ENCODE measurements at regions of chr10 and their contacts with region 1.

Region 1: GRCh38 chr10:89793649-89794254 is 92.4 kb downstream of the KIF20B start:
- DNase-seq: peak in 5 of 9 experiments; percentile 14 to 74 (median 27)
- ATAC-seq: peak; percentile 61
- H3K4me3 ChIP-seq: no peak overlapping the region
- H3K4me3 Mint-ChIP-seq: no peak overlapping the region
- H3K27ac ChIP-seq: no peak overlapping the region
- H3K27ac Mint-ChIP-seq: no peak overlapping the region
- H3K4me1 ChIP-seq: no peaks in the 10 kb centered on the region
- H3K4me1 Mint-ChIP-seq: no peaks in the 10 kb centered on the region
- H3K27me3 ChIP-seq: no peaks in the 10 kb centered on the region
- H3K27me3 Mint-ChIP-seq: peaks cover 14% of the 10 kb centered on the region
- CTCF ChIP-seq: peak; percentile 78

Region 2: GRCh38 chr10:90138844-90139243 is 345.1 kb after region 1 on chr10:
- CTCF ChIA-PET with region 1: no interaction called
- POLR2A ChIA-PET with region 1: no interaction called
- intact Hi-C with region 1: loop called in 1 of 2 experiments (anchors 5 kb)
- DNase-seq: no peak
- ATAC-seq: no peak
- H3K4me3 ChIP-seq: no peak overlapping the region
- H3K4me3 Mint-ChIP-seq: no peak overlapping the region
- H3K27ac ChIP-seq: no peak overlapping the region
- H3K27ac Mint-ChIP-seq: no peak overlapping the region
- H3K4me1 ChIP-seq: no peaks in the 10 kb centered on the region
- H3K4me1 Mint-ChIP-seq: no peaks in the 10 kb centered on the region
- H3K27me3 ChIP-seq: no peaks in the 10 kb centered on the region
- H3K27me3 Mint-ChIP-seq: no peaks in the 10 kb centered on the region
- CTCF ChIP-seq: no peak

Region 3: GRCh38 chr10:90787393-90788198 is 993.8 kb after region 1 on chr10:
- CTCF ChIA-PET with region 1: interaction called, 13 read pairs
- POLR2A ChIA-PET with region 1: no interaction called
- intact Hi-C with region 1: loop called (anchors 1 kb)
- DNase-seq: peak in 3 of 9 experiments; percentile 19 to 49 (median 36)
- ATAC-seq: no peak
- H3K4me3 ChIP-seq: no peak overlapping the region
- H3K4me3 Mint-ChIP-seq: no peak overlapping the region
- H3K27ac ChIP-seq: no peak overlapping the region
- H3K27ac Mint-ChIP-seq: no peak overlapping the region
- H3K4me1 ChIP-seq: no peaks in the 10 kb centered on the region
- H3K4me1 Mint-ChIP-seq: no peaks in the 10 kb centered on the region
- H3K27me3 ChIP-seq: no peaks in the 10 kb centered on the region
- H3K27me3 Mint-ChIP-seq: no peaks in the 10 kb centered on the region
- CTCF ChIP-seq: peak; percentile 41